CD8-positive, alpha-beta T cell (primary cell): ENCODE measurements at regions of chrX and their contacts with region 1.

Region 1: DNA sequence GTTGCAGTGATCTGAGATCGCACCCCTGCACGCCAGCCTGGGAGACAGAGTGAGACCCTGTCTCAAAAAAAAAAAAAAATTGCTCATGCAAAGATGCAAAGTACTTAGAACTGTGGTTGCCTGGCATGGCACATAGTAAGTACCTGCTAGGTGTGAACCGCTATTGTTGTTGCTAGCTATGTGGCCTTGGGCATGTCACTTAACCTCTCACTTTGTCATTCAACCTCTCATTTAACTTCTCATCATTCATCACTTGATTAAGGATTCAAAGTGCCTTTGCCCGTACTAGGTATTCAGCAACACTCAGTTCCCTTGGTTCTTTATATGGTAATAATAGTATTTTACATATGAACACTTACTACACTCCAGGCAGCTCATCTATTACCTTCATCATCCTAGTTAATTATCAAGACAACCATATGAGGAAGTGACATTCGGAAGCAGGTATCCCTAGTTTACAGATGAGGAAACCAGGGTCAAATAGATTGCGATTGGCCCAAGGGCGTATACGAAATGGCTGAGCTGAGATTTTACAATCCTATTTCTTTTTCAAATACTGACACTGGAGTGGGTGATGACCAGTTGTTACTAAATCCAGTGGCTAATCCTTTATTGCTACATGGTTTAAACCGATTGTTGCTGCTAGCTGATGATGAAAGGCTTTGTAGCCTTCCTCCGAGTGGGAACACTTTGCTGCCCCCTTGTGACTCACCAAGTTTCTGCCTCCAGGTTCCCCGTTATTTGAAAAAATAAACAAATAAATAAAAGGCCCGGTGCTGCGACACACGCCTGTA is 28.8 kb upstream of the SOWAHD start:
- DNase-seq: peak; percentile 28 to 79 (median 67)
- ATAC-seq: peak; percentile 60
- H3K4me3 ChIP-seq: no peak overlapping the region
- H3K4me3 Mint-ChIP-seq: no peak overlapping the region
- H3K27ac ChIP-seq: no peak overlapping the region
- H3K27ac Mint-ChIP-seq: no peak overlapping the region
- H3K4me1 ChIP-seq: peaks cover 5% of the 10 kb centered on the region
- H3K4me1 Mint-ChIP-seq: peaks cover 11% of the 10 kb centered on the region
- H3K27me3 ChIP-seq: no peaks in the 10 kb centered on the region
- H3K27me3 Mint-ChIP-seq: no peaks in the 10 kb centered on the region
- CTCF ChIP-seq: peak; percentile 63

Region 2: DNA sequence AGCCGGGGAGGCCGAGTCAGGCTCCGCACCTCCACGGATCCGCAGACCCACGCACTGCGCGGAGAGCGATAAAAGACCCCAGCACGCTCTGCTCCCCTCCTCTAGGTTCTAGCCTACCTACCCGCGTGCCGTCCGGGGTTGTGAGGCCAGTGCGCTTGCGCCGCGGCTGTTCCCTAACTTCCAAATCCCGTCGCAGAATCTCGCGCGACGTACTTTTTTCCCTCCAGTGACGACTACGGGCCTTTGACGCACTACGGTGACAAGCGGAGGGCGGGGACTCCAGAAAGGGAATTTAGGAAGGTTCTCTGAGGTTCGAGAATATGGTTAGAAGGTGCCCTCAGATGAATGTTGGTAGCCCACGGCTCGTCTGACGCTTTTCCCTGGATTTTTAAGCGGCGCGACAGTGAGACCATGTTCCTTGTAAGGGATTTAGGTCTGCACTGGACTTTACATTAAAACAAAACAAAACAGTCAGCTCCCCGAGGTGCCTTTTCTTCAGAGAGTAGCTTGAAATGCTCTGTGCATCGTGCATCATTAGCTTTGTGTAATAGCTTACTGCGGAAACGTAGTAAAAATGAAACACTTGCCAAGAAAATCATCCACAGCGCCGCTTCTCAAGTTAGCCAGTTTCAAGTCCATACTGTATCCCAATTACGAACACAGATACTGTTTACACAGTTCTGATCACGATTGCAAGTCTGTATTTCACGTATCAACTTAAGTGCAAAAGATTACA is 123.2 kb before region 1 on chrX and contains the start of gene NKRF:
- CTCF ChIA-PET with region 1: interaction called, 6 read pairs
- POLR2A ChIA-PET with region 1: no interaction called
- intact Hi-C with region 1: loop called in 1 of 2 experiments (anchors 1 kb)
- DNase-seq: peak; percentile 79 to 96 (median 88)
- ATAC-seq: peak; percentile 76
- H3K4me3 ChIP-seq: peak within 1 kb of the TSS; percentile 89 to 90
- H3K4me3 Mint-ChIP-seq: peak within 1 kb of the TSS; percentile 87
- H3K27ac ChIP-seq: peak within 1 kb of the TSS; percentile 94 to 96
- H3K27ac Mint-ChIP-seq: peak within 1 kb of the TSS; percentile 97
- H3K4me1 ChIP-seq: peaks cover 7% of the 10 kb centered on the region
- H3K4me1 Mint-ChIP-seq: peaks cover 39% of the 10 kb centered on the region
- H3K27me3 ChIP-seq: no peaks in the 10 kb centered on the region
- H3K27me3 Mint-ChIP-seq: no peaks in the 10 kb centered on the region
- CTCF ChIP-seq: no peak
- total RNA-seq, gene NKRF: 18.3 to 20.5 TPM

Region 3: DNA sequence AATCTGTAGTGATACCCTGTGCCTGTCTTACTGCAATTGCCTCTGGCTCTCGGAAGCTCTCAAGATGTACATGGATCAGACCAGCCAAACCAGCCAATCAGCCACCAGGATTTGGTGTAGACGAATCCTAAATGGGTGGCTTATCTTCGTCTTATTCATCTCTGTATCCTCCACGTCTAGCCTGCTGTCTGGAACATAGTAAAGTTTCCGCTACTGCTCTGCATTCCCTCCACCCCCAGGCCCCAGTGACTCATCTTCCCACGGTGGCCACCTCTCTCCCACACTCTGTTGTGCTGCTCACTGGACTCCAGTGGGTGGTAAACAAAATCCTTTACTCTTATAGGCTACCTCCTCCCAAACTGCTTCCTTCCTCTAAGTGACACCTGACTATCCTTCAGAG is 74.5 kb before region 1 on chrX:
- CTCF ChIA-PET with region 1: interaction called, 22 read pairs
- POLR2A ChIA-PET with region 1: no interaction called
- intact Hi-C with region 1: loop called (anchors 2 to 5 kb)
- DNase-seq: peak in 7 of 9 experiments; percentile 12 to 48 (median 27)
- ATAC-seq: peak; percentile 32
- H3K4me3 ChIP-seq: no peak overlapping the region
- H3K4me3 Mint-ChIP-seq: peak overlapping the region; percentile 26
- H3K27ac ChIP-seq: no peak overlapping the region
- H3K27ac Mint-ChIP-seq: peak overlapping the region; percentile 87
- H3K4me1 ChIP-seq: peaks cover 21% of the 10 kb centered on the region
- H3K4me1 Mint-ChIP-seq: peaks cover 26% of the 10 kb centered on the region
- H3K27me3 ChIP-seq: no peaks in the 10 kb centered on the region
- H3K27me3 Mint-ChIP-seq: no peaks in the 10 kb centered on the region
- CTCF ChIP-seq: no peak

Region 4: DNA sequence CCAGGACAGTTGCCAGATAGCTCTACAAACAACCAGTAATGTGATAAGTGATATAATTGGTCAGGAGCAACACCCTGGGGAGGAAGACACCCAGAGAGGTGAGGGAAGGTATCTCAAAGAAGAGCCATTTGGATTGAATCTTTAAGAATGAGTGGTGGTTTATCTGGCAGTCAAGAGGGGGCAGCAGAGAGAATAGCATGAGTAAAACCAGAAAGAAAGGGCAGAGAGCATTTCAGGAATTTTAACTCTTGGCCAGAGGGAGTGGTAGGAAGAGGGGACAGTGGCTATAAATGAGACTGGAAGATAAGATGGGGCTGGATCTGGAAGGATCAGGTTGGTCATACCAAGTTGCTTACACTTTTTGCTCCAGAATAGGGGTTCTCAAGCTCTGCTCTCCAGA is 30.8 kb before region 1 on chrX:
- CTCF ChIA-PET with region 1: interaction called, 16 read pairs
- POLR2A ChIA-PET with region 1: interaction called, 3 read pairs
- intact Hi-C with region 1: loop called (anchors 1 to 2 kb)
- DNase-seq: peak in 3 of 9 experiments; percentile 20 to 70 (median 60)
- ATAC-seq: peak; percentile 40
- H3K4me3 ChIP-seq: no peak overlapping the region
- H3K4me3 Mint-ChIP-seq: no peak overlapping the region
- H3K27ac ChIP-seq: no peak overlapping the region
- H3K27ac Mint-ChIP-seq: no peak overlapping the region
- H3K4me1 ChIP-seq: peaks cover 1% of the 10 kb centered on the region
- H3K4me1 Mint-ChIP-seq: peaks cover 5% of the 10 kb centered on the region
- H3K27me3 ChIP-seq: no peaks in the 10 kb centered on the region
- H3K27me3 Mint-ChIP-seq: no peaks in the 10 kb centered on the region
- CTCF ChIP-seq: peak; percentile 55